Esophagus muscularis mucosa (tissue), 4 donors: ENCODE measurements at regions of chr12 and their contacts with region 1.

Region 1: GRCh38 chr12:89524541-89525285 is at the start of gene GALNT4:
- DNase-seq: peak; percentile 98
- H3K4me3 ChIP-seq: peak within 1 kb of the TSS; percentile 77 to 92 (median 82)
- H3K27ac ChIP-seq: peak within 1 kb of the TSS; percentile 89 to 94 (median 90)
- H3K4me1 ChIP-seq: peaks cover 38 to 57% (median 49%) of the 10 kb centered on the region in 4 donors
- H3K27me3 ChIP-seq: no peaks in the 10 kb centered on the region
- CTCF ChIP-seq: peak; percentile 57 to 84 (median 60)
- EP300 ChIP-seq: no peak
- POLR2A ChIP-seq: peak; percentile 5
- total RNA-seq, gene GALNT4: 5.0 to 6.2 (median 5.4) TPM

Region 2: GRCh38 chr12:89019408-89020120 is 505.1 kb before region 1 on chr12:
- intact Hi-C with region 1: loop called (anchors 2 kb)
- DNase-seq: no peak
- H3K4me3 ChIP-seq: peak overlapping the region; percentile 34 to 53 (median 40)
- H3K27ac ChIP-seq: no peak overlapping the region
- H3K4me1 ChIP-seq: peaks cover 3 to 20% (median 17%) of the 10 kb centered on the region in 4 donors
- H3K27me3 ChIP-seq: no peaks in the 10 kb centered on the region
- CTCF ChIP-seq: peak; percentile 76 to 88 (median 88)
- EP300 ChIP-seq: no peak
- POLR2A ChIP-seq: no peak

Region 3: DNA sequence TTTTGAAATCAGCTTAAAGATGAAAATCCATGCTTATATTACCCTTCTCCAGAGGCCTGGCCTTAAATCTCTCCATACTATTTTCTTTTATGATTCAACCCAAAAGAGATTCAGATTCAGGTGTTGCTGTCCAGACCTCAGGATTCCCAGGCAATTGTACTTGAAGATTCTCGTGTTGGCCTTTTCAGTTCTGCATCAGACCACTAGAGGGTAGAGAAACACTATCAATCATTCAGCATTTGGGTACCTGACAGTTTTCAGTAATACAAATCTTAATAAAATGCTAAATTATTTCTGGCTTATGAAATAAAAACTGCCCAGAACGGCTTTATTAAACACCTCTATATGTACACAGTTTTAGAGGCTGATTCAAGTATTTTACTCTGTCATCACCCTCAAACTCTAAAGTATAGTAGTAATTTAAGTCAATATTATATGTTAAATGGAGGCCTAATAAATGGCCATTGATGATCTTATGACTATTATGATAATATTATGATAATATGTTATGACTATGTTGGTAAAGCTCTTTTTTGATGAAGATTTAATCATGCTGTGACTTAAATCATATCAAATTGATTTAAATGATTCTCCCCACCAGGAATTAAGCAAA is 473.5 kb before region 1 on chr12:
- intact Hi-C with region 1: loop called (anchors 10 kb)
- DNase-seq: peak; percentile 42
- H3K4me3 ChIP-seq: no peak overlapping the region
- H3K27ac ChIP-seq: no peak overlapping the region
- H3K4me1 ChIP-seq: no peaks in the 10 kb centered on the region
- H3K27me3 ChIP-seq: no peaks in the 10 kb centered on the region
- CTCF ChIP-seq: peak; percentile 92 to 95 (median 95)
- EP300 ChIP-seq: no peak
- POLR2A ChIP-seq: no peak

Region 4: DNA sequence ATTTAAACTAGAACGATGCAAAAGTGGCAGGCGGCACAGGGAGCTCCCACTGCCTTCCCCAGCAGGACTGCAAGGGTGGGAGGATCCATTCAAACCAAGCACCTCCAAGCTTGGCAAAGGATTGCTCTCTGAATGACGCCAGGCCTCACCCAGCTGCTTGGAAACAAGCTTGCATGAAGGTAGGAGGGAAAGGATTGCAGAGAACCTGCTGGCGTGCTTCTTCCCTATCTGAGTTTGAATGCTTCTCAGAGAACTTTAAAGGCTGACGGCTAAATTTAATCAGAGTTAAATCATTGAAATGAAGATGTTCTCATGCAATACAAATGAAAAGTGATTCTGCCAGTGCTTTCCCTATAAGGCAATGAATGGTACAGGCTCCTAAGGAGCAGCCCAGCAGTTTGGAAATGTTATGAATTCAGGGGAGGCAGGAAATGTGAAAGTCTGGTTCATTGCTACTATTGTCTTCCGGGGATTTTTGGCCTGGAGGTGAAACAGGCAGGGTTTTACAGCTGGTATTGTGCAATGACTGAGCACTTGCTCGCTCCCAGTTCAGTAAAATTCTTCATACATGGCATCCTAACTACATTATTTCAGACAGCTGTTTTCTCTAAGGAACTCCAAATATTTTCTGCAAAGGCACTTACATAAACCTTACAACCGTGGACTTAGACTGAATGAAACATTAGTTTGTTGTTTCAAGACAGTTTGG is 140.5 kb before region 1 on chr12:
- intact Hi-C with region 1: loop called (anchors 10 kb)
- DNase-seq: no peak
- H3K4me3 ChIP-seq: peak overlapping the region; percentile 8 to 36 (median 26)
- H3K27ac ChIP-seq: peak overlapping the region; percentile 68 to 85 (median 82)
- H3K4me1 ChIP-seq: peaks cover 35 to 56% (median 49%) of the 10 kb centered on the region in 4 donors
- H3K27me3 ChIP-seq: no peaks in the 10 kb centered on the region
- CTCF ChIP-seq: no peak
- EP300 ChIP-seq: no peak
- POLR2A ChIP-seq: no peak

Region 5: DNA sequence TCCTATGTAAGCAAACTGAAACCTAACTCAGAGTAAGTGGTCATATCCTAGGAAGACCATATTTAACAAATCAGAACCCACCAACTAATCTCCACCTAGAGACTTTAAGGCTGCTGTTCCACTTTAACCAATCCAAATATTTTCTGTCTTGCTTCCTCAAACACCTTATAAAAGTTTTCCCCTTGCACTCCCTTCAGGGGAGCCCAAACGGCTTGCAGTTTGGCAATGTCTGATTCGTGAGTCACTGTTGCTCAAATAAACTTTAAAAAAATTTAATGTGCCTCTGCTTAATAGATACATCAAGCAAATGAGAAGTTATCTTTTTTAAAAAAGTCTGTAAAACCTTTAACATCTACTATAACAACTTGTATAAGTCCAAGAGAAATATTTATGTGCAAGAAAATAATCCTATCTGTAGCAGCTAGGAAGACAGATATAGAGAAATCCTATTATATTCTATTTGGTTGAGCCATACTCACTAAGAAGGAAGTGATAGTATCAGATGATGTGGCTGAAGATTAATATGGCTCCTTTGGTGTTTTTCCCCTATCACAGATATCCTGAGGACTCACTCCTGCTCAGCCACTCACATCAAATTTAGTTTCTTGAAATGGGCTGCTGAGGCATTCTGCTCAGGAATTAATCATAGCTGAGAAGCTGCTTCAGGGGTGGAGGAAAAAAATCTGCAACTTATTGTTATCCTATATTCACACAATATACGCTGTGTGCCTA is 107.3 kb before region 1 on chr12:
- intact Hi-C with region 1: no loop called
- DNase-seq: peak; percentile 29
- H3K4me3 ChIP-seq: peak overlapping the region in 1 of 4 donors; percentile 27
- H3K27ac ChIP-seq: peak overlapping the region; percentile 44 to 68 (median 52)
- H3K4me1 ChIP-seq: peaks cover 0 to 32% (median 28%) of the 10 kb centered on the region in 4 donors
- H3K27me3 ChIP-seq: no peaks in the 10 kb centered on the region
- CTCF ChIP-seq: no peak
- EP300 ChIP-seq: no peak
- POLR2A ChIP-seq: no peak

Region 6: DNA sequence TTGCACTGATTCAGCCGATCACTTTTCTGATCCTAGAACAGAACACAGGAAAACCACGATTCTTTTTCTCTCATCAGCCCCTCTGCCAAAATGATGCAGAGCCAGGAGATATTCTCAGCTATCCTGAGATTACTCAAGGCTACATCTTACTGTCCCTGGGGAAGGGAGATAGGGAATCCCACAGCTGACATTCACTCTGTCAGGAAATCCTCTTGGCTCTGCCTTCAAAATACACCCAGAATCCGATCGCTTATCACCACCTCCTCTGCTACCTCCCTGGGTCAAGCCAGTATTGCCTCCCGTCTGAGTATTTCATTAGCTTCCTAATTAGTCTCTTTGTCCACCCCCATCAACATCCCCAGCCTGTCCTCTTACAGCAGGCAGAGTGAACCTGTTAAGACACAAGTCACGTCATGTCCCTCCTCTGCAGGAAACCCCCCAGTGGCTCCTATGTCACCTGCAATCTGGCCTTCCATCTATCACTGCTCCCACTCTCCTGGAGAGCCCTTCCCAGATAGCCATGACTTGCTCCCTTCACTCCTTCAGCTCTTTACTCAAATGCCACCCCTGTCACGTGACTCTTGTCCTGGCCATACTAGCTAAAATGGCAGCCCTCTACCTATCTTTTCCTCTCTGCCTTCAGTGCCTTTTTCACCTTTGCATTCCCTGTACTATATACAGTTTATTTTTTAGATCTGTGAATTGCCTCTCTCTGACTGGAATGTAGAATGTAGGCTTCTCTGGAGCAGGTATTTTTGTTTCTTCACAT is 70.4 kb before region 1 on chr12:
- intact Hi-C with region 1: no loop called
- DNase-seq: no peak
- H3K4me3 ChIP-seq: peak overlapping the region; percentile 3 to 34 (median 18)
- H3K27ac ChIP-seq: peak overlapping the region; percentile 82 to 86 (median 83)
- H3K4me1 ChIP-seq: peaks cover 30 to 59% (median 52%) of the 10 kb centered on the region in 4 donors
- H3K27me3 ChIP-seq: no peaks in the 10 kb centered on the region
- CTCF ChIP-seq: no peak
- EP300 ChIP-seq: no peak
- POLR2A ChIP-seq: no peak

Region 7: DNA sequence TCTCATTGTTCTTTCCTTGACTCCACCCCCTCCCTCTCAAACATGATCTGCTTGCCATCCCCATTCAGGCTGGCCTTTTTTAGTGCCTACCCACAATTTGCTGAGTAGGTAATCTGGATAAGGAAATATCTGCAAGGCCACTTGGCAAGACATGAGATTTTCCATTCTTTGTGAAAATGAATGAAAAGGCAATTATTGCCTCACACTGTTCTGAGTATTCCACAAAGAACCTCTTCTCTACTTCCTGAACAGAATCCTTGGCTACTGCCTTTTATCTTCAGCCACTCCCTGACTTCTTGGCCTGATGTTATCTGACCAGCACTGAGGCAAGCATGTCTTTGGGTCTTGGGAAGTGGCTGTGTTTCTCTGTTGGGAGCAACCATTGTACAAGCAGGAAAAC is 447.2 kb after region 1 on chr12:
- intact Hi-C with region 1: no loop called
- DNase-seq: no peak
- H3K4me3 ChIP-seq: no peak overlapping the region
- H3K27ac ChIP-seq: no peak overlapping the region
- H3K4me1 ChIP-seq: peaks cover 0 to 6% (median 1%) of the 10 kb centered on the region in 4 donors
- H3K27me3 ChIP-seq: no peaks in the 10 kb centered on the region
- CTCF ChIP-seq: no peak
- EP300 ChIP-seq: no peak
- POLR2A ChIP-seq: no peak